BJ (cell line): ENCODE measurements at regions of chr3 and their contacts with region 1.

Region 1: GRCh38 chr3:138915503-138916498 is 31.1 kb downstream of the FOXL2 start:
- DNase-seq: no peak
- H3K4me3 ChIP-seq: peak overlapping the region; percentile 73
- H3K27me3 ChIP-seq: peaks cover 2% of the 10 kb centered on the region; the same call in 1 of the 2 replicates
- CTCF ChIP-seq: peak; percentile 91

Region 2: DNA sequence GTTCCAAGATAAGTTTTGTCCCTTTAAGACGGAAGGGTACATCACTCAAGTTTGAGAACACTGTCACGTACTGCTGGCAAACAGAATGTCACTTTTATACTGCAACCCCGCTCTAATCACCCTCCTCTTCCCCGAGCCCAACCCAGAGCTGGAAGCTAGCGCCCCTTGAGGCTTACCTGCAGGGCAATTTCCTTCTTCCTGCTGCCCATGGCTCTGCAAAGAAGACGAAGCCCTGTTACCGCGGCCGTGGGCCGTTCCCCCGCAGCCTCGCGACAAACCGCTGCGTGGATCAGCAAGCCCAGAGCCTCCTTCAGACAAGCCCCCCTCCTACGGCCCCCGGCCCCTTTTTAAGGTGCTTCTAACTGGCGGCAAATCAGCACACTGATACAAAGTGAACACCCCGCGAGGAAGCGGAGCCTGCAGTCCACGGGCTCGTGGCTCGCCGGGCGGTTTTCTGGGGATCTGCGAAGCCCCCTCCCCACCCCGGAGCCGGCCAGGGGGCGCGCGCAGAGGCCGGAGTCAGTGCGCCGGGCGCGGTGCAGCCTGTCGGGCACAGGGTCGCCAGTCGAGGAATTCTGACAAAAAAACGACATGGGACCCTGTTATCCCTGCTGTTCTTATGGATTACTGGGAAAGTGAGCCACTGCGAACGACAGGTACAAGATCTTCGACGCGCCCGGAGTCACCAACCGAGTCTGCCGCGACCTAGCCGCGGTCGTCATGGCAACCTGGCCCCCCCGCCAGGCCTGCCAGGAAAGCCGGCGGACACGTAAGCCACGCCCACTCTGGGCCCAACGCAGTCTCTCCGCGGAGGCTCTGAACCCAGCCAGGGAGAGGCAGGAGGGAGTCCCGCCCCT is 586.4 kb before region 1 on chr3 and contains the start of gene NME9:
- CTCF ChIA-PET with region 1: interaction called, 10 read pairs
- POLR2A ChIA-PET with region 1: no interaction called
- DNase-seq: no peak
- H3K4me3 ChIP-seq: peak within 1 kb of the TSS; percentile 52
- H3K27me3 ChIP-seq: 0 out of 2 replicates have a peak, but pooled peaks cover under 1% of the 10 kb centered on the region
- CTCF ChIP-seq: peak; percentile 80
- polyA plus RNA-seq, gene NME9: 0.06 TPM in 1 of 2 replicates, not detected in the other

Region 3: DNA sequence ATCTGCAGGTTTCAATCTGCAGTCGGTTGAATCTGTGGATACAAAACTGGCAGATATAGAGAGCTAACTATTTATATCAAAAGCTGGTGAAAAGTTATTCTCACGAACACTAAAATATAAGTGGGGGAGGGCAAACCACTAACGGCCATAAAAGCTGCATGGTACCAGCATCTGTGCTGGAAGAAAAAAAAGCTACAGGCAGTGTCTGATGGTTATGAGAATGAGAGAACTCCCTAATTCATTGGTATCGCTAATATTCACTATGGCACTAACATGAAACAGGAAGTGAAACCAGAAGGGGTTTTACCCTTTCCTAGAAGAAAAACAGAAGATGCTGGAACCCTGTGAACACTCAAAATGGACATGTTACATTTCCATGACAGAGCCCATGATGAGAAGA is 337.7 kb before region 1 on chr3:
- CTCF ChIA-PET with region 1: interaction called, 16 read pairs
- POLR2A ChIA-PET with region 1: no interaction called
- DNase-seq: no peak
- H3K4me3 ChIP-seq: no peak overlapping the region
- H3K27me3 ChIP-seq: no peaks in the 10 kb centered on the region
- CTCF ChIP-seq: no peak

Region 4: GRCh38 chr3:138694287-138695007 is 221.4 kb before region 1 on chr3:
- CTCF ChIA-PET with region 1: interaction called, 191 read pairs
- POLR2A ChIA-PET with region 1: no interaction called
- DNase-seq: peak; percentile 99
- H3K4me3 ChIP-seq: no peak overlapping the region
- H3K27me3 ChIP-seq: no peaks in the 10 kb centered on the region
- CTCF ChIP-seq: no peak

Region 5: DNA sequence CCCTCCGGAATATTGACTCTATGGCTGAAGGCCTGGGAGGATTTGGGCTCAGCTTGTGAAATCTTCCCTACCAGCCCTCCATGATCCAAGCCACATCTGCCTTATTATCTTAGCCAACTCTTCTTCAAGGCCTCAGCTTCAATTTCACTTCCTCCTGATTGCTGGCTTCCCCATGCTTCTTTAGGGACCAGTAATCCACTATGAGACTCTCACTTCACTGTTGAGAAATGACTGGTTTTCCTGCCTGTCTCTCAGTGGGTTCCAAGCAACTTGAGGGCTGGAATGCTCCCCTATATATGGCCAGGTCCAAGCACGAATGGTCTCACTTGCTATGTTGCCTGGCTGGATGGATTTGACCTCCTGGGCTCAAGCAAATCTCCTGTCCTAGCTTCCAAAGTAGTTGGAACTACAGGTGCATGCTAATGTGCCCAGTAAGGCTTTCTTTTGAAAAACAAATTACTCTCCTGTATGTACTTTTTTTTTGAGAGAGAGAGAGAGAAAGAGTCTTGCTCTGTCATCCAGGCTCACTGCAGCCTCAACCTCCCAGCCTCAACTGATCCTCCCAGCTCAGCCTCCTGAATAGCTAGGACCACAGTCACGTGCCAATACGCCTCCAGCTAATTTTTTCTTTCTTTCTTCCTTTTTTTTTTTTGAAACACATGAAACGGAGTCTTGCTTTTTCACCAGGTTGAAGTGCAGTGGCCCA is 73.2 kb before region 1 on chr3:
- CTCF ChIA-PET with region 1: interaction called, 14 read pairs
- POLR2A ChIA-PET with region 1: no interaction called
- DNase-seq: no peak
- H3K4me3 ChIP-seq: no peak overlapping the region
- H3K27me3 ChIP-seq: no peaks in the 10 kb centered on the region
- CTCF ChIP-seq: no peak

Region 6: GRCh38 chr3:138898301-138898700 is 17.5 kb before region 1 on chr3:
- CTCF ChIA-PET with region 1: interaction called, 44 read pairs
- POLR2A ChIA-PET with region 1: no interaction called
- DNase-seq: peak; percentile 9
- H3K4me3 ChIP-seq: no peak overlapping the region
- H3K27me3 ChIP-seq: peaks cover 3% of the 10 kb centered on the region; the same call in 1 of the 2 replicates
- CTCF ChIP-seq: no peak